Left ventricle myocardium inferior (tissue), 1 donor: ENCODE measurements at regions of chr5 and their contacts with region 1.

Region 1: GRCh38 chr5:16791036-16791705 is 144.9 kb downstream of the MYO10 start:
- DNase-seq: no peak
- H3K4me3 ChIP-seq: no peak overlapping the region
- H3K27ac ChIP-seq: no peak overlapping the region
- H3K4me1 ChIP-seq: no peaks in the 10 kb centered on the region
- H3K27me3 ChIP-seq: no peaks in the 10 kb centered on the region
- CTCF ChIP-seq: peak; percentile 77

Region 2: GRCh38 chr5:17189381-17190036 is 398.3 kb after region 1 on chr5:
- intact Hi-C with region 1: loop called (anchors 5 kb)
- DNase-seq: peak; percentile 70
- H3K4me3 ChIP-seq: no peak overlapping the region
- H3K27ac ChIP-seq: peak overlapping the region; percentile 41
- H3K4me1 ChIP-seq: peaks cover 10% of the 10 kb centered on the region
- H3K27me3 ChIP-seq: no peaks in the 10 kb centered on the region
- CTCF ChIP-seq: peak; percentile 86

Region 3: DNA sequence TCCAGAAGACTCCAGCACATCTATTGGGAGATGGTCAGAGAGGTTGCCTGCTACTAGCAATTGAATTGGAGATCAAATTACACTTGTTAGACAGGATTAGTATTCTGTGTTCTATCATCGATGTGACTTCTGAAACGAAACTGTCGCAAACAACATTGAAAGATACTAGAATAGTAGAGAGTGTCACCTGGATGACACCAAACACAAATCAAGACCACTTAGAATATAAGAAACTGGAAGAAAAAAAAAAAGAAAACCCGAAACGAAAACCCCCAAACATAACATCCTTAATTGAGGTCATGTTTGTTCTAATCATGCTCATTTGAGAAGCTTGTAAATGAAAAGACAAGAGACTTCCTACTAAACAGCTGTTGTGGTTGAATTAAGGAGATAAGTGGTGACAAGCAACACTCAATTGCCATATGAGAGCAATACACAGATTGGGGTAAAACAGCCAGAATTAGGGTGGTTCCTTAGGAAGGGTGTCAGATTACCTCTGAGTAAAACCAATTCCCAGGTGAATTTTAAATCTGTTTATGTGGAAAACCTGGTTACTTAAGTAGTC is 523.8 kb after region 1 on chr5:
- intact Hi-C with region 1: no loop called
- DNase-seq: no peak
- H3K4me3 ChIP-seq: no peak overlapping the region
- H3K27ac ChIP-seq: no peak overlapping the region
- H3K4me1 ChIP-seq: no peaks in the 10 kb centered on the region
- H3K27me3 ChIP-seq: no peaks in the 10 kb centered on the region
- CTCF ChIP-seq: no peak